Lower leg skin (tissue), 4 donors: ENCODE measurements at regions of chr7 and their contacts with region 1.

Region 1: GRCh38 chr7:98294796-98295382 is 13.4 kb downstream of the BRI3 start:
- DNase-seq: peak in 1 of 2 donors; percentile 92
- H3K4me3 ChIP-seq: no peak overlapping the region
- CTCF ChIP-seq: no peak
- POLR2A ChIP-seq: no peak

Region 2: GRCh38 chr7:98133181-98133580 is 161.7 kb before region 1 on chr7:
- intact Hi-C with region 1: no loop called
- DNase-seq: no peak
- H3K4me3 ChIP-seq: no peak overlapping the region
- CTCF ChIP-seq: no peak
- POLR2A ChIP-seq: no peak

Region 3: DNA sequence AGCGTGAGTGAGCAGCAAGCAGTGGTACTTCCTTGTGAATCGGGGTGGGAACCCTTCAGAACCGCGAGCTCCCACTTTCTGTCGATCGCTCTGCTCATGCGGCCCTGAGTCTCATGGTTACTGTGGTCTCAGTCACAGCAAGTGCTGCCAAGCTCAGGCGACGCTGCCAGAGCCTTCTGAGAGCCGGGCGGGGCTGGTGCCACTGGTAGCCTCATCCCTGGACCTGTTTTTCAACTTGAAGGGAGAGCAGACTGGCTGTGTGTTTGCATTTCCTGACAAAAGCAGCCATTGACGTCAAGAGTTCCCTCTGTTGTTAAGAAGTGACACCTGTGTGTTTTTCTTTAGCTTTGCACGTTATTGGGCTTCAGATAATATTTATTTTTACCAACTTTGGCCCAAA is 116.5 kb before region 1 on chr7:
- intact Hi-C with region 1: no loop called
- DNase-seq: peak in 1 of 2 donors; percentile 48
- H3K4me3 ChIP-seq: no peak overlapping the region
- CTCF ChIP-seq: no peak
- POLR2A ChIP-seq: no peak

Region 4: DNA sequence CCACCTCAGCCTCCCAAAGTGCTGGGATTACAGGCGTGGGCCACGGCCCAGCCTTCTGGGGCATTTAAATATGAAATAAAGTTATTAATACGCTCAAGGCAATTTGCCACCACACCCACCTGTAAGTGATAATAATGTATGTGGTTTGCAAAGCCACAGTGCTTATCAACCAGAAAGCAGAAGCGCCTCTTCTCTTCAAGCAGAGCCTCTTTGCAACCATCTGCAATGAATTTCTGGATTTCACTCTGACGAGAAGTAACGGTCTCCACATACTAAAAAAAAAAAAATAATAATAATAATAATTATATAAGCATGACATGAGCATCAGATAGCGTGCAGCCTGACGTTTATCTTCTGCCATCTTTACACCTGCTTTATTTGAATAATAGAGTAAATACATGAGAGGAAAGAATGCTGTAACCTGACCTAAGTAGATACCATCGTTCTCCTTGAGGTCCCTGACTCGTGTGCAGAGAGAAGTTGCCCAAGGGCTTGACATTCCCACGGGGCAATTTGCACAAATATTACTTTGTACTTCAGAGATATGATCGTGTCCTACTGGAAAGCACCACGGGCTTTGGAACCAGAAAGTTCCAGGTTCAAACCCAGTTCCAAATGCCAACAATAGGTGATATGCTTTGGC is 20.6 kb after region 1 on chr7:
- intact Hi-C with region 1: no loop called
- DNase-seq: no peak
- H3K4me3 ChIP-seq: no peak overlapping the region
- CTCF ChIP-seq: no peak
- POLR2A ChIP-seq: no peak

Region 5: GRCh38 chr7:98400542-98401340 is 105.9 kb after region 1 on chr7 and contains the start of gene BAIAP2L1:
- intact Hi-C with region 1: loop called (anchors 10 kb)
- DNase-seq: peak; percentile 80 to 96
- H3K4me3 ChIP-seq: peak within 1 kb of the TSS; percentile 62
- CTCF ChIP-seq: no peak
- POLR2A ChIP-seq: no peak
- total RNA-seq, gene BAIAP2L1: 17.2 to 28.9 (median 20.7) TPM